Sciatic nerve (tissue), 2 donors: ENCODE measurements at regions of chr3 and their contacts with region 1.

Region 1: GRCh38 chr3:30768703-30769685 is 125.5 kb downstream of the GADL1 start:
- DNase-seq: peak; percentile 86
- ATAC-seq: peak; percentile 53

Region 2: DNA sequence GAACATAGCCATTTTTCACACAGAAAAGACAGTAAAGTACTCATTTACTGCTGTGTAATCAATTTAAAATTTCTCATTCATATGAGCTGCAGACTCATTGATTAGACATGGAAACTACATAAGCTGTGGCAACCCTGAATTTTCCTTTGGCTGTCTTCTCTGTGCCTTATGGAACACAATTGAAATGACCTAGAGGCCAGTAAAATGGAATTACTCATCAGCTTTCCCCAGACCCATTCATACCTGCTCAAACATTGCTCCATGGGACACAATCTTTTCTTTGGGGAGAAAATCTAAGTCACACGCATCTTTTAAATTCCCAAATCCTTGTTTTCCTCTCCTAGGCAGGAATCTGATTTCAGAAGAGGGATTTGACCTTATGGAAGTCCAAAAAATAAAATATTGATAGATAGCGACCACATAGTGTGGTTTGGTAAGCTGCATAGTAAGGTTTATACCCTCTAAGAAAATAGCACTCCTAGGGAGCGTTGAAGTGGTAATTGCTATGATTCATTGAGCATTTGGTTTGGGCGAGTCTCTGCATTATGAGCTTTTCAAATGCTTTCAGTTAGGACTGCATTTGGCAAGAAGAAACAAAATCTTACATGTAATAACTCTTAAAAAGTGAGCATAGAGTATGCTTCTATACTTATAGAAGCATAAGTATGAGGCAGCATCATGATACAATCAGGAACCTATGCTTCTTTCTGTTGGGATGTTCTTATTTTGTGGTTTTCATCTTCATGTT is 368.9 kb after region 1 on chr3:
- intact Hi-C with region 1: loop called (anchors 5 kb)
- DNase-seq: no peak
- ATAC-seq: no peak